ENCODE measurements at regions of chr3 and their contacts with region 1.

Region 1: DNA sequence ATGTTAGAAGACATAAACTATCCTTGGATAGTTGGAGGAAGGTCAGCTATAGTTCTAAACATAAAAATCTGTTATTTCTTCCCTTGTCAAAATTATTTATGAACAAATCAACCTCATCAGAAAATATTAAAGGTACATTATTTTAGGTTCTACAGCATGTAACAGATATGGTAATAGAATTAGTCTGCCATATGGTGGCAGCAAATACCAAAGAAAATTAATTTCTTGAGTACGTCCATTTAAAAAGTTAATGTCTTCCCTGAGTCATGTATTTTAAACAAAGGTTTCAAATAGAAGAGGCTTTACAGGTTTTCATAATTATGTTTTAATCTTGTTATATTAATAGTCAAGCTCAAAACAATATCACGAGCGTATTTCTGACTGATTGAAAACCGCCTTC is 17.9 kb upstream of the ANKRD28 start:
- DNase-seq: peak; percentile 84
- ATAC-seq: peak; percentile 59
- H3K4me3 ChIP-seq: no peak overlapping the region
- H3K27ac ChIP-seq: no peak overlapping the region
- H3K4me1 ChIP-seq: peaks cover 21% of the 10 kb centered on the region
- H3K27me3 ChIP-seq: no peaks in the 10 kb centered on the region
- CTCF ChIP-seq: peak; percentile 84

Region 2: DNA sequence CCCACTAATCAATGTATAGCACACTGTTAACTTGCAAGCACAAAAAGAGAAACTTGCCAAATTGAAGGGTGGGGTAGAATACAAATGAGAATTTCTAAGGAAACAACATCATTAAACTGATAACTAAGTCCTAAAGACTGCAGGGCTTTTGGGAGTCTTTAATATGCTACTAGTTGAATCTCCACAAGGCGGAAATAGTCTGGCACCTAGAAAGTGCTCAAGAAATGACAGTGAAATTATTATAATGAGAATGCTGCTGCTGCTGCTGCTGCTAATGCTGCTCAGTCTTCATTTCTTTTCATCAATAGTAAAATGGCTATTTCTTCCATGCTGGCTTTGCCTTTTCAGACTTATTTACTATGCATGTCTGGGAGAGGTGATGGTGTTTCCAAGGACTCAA is 122.3 kb before region 1 on chr3:
- CTCF ChIA-PET with region 1: no interaction called
- POLR2A ChIA-PET with region 1: no interaction called
- intact Hi-C with region 1: loop called (anchors 1 kb)
- DNase-seq: peak; percentile 46
- ATAC-seq: peak; percentile 74
- H3K4me3 ChIP-seq: no peak overlapping the region
- H3K27ac ChIP-seq: no peak overlapping the region
- H3K4me1 ChIP-seq: no peaks in the 10 kb centered on the region
- H3K27me3 ChIP-seq: no peaks in the 10 kb centered on the region
- CTCF ChIP-seq: peak; percentile 48

Region 3: DNA sequence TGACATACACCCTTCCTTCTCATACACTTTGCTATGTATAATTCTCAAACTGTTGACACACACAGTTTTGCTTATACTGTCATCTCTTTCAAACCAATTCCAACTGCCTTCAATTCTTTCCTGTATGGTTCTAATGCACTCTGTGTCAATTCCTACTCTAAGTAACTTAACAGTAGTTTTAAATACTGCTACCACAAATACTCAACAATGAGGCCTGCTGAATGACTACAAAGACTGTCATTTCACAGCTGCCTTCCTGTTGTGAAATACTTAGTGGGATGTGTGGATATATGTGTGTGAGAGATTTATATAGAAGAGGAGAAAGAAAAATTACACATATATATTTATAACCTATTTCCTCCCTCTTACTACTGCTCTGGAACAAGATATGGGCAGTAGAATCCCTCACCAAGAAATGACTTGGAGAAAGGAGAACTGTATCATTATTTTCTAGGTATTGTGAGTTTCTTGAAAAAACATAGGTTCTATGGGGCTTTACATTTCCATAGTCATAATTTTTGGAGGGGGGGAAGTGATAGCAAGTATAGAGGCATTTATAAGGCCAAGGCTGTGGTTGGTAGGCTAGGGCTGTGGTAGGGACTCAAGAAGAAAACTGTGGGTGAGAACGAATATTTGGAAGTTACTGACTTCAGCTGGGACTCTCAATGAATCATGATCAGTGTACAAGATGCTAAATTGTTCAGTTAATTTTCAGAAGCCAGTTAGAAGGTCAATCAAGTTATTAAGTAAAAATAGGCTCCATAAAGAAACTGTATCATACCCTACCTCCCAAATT is 106.6 kb before region 1 on chr3:
- CTCF ChIA-PET with region 1: no interaction called
- POLR2A ChIA-PET with region 1: no interaction called
- intact Hi-C with region 1: no loop called
- DNase-seq: no peak
- ATAC-seq: no peak
- H3K4me3 ChIP-seq: no peak overlapping the region
- H3K27ac ChIP-seq: no peak overlapping the region
- H3K4me1 ChIP-seq: no peaks in the 10 kb centered on the region
- H3K27me3 ChIP-seq: no peaks in the 10 kb centered on the region
- CTCF ChIP-seq: no peak

Region 4: GRCh38 chr3:15982667-15983145 is 167.0 kb after region 1 on chr3:
- CTCF ChIA-PET with region 1: interaction called, 5 read pairs
- POLR2A ChIA-PET with region 1: no interaction called
- intact Hi-C with region 1: loop called (anchors 1 kb)
- DNase-seq: peak; percentile 93
- ATAC-seq: peak; percentile 95
- H3K4me3 ChIP-seq: peak overlapping the region; percentile 60
- H3K27ac ChIP-seq: peak overlapping the region; percentile 90
- H3K4me1 ChIP-seq: peaks cover 23% of the 10 kb centered on the region
- H3K27me3 ChIP-seq: no peaks in the 10 kb centered on the region
- CTCF ChIP-seq: no peak

Region 5: GRCh38 chr3:16148783-16149182 is 333.1 kb after region 1 on chr3:
- CTCF ChIA-PET with region 1: no interaction called
- POLR2A ChIA-PET with region 1: no interaction called
- intact Hi-C with region 1: loop called (anchors 10 kb)
- DNase-seq: no peak
- ATAC-seq: no peak
- H3K4me3 ChIP-seq: no peak overlapping the region
- H3K27ac ChIP-seq: no peak overlapping the region
- H3K4me1 ChIP-seq: no peaks in the 10 kb centered on the region
- H3K27me3 ChIP-seq: no peaks in the 10 kb centered on the region
- CTCF ChIP-seq: no peak

Region 6: GRCh38 chr3:16247276-16248061 is 431.8 kb after region 1 on chr3:
- CTCF ChIA-PET with region 1: interaction called, 3 read pairs
- POLR2A ChIA-PET with region 1: no interaction called
- intact Hi-C with region 1: loop called (anchors 1 kb)
- DNase-seq: peak; percentile 93
- ATAC-seq: peak; percentile 87
- H3K4me3 ChIP-seq: peak overlapping the region; percentile 33; the same call in 1 of the 2 replicates
- H3K27ac ChIP-seq: no peak overlapping the region
- H3K4me1 ChIP-seq: peaks cover 25% of the 10 kb centered on the region
- H3K27me3 ChIP-seq: no peaks in the 10 kb centered on the region
- CTCF ChIP-seq: peak; percentile 98

Measured in PC-3 (cell line).